Activated CD8-positive, alpha-beta T cell treated with anti-CD3 and anti-CD28 coated beads, Interleukin-2, amount 10 ng/mL, durations not matched to agents 7 days and 5 days (primary cell): ENCODE measurements at regions of chr9 and their contacts with region 1.

Region 1: DNA sequence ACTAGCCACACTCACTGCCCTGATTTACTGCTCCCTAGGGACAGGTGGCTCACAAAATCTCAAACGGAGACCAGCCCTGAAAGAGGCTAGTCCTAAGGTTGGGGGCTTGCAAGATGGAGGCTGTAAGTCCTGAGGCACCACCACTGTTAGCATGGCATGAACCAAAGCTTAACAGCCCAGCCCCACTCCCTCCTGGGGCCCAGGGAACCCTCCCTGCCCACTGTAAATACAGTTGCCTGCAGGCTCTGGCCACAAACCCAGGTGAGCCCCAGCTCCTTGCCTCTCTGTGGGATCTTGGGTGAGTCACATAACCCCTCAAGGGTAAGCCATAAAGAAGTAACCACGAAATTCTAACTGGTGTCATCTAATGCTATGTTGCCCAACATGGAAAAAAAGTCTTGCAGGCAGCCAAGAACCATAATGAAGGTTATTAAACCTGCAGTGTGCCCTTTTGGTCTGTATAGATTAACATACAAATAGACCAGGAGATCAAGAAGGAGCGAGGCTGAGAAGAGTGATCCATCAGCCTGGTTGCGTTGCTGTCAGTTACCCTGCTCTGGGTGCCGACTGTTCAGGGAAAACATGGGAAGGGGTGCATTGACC is 1.7 kb upstream of the POMT1 start:
- DNase-seq: peak; percentile 77
- ATAC-seq: peak; percentile 55
- H3K4me3 Mint-ChIP-seq: peak overlapping the region; percentile 94
- H3K27ac Mint-ChIP-seq: peak overlapping the region; percentile 91
- H3K4me1 Mint-ChIP-seq: peaks cover 64% of the 10 kb centered on the region
- H3K27me3 Mint-ChIP-seq: no peaks in the 10 kb centered on the region

Region 2: GRCh38 chr9:131478421-131478868 is 22.6 kb before region 1 on chr9:
- CTCF ChIA-PET with region 1: interaction called, 3 read pairs
- POLR2A ChIA-PET with region 1: interaction called, 12 read pairs
- DNase-seq: peak; percentile 67
- ATAC-seq: peak; percentile 67
- H3K4me3 Mint-ChIP-seq: no peak overlapping the region
- H3K27ac Mint-ChIP-seq: no peak overlapping the region
- H3K4me1 Mint-ChIP-seq: no peaks in the 10 kb centered on the region
- H3K27me3 Mint-ChIP-seq: no peaks in the 10 kb centered on the region

Region 3: DNA sequence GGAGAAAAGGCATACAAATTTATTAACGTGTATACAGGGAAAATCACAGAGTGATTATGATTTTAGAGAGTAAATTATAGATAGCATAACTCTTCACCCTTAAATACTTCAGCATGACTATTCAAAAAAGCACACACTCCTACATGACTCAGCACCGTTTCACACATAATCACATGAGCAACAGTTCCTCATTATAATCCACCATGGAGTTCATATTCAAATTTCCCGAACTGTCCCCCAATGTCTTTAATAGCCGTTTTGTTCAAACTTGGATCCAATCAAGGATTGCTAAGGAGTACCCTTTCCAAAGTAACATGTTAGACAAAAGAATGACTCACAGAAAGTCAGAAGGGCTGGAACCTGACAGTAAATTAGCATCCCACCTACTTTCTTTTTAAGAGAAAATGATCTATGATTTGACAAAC is 206.7 kb after region 1 on chr9:
- CTCF ChIA-PET with region 1: no interaction called
- POLR2A ChIA-PET with region 1: no interaction called
- DNase-seq: no peak
- ATAC-seq: no peak
- H3K4me3 Mint-ChIP-seq: no peak overlapping the region
- H3K27ac Mint-ChIP-seq: peak overlapping the region; percentile 57
- H3K4me1 Mint-ChIP-seq: peaks cover 74% of the 10 kb centered on the region
- H3K27me3 Mint-ChIP-seq: no peaks in the 10 kb centered on the region